Activated CD4-positive, alpha-beta T cell treated with anti-CD3 and anti-CD28 coated beads for 36 hours (primary cell): ENCODE measurements at regions of chr19 and their contacts with region 1.

Region 1: DNA sequence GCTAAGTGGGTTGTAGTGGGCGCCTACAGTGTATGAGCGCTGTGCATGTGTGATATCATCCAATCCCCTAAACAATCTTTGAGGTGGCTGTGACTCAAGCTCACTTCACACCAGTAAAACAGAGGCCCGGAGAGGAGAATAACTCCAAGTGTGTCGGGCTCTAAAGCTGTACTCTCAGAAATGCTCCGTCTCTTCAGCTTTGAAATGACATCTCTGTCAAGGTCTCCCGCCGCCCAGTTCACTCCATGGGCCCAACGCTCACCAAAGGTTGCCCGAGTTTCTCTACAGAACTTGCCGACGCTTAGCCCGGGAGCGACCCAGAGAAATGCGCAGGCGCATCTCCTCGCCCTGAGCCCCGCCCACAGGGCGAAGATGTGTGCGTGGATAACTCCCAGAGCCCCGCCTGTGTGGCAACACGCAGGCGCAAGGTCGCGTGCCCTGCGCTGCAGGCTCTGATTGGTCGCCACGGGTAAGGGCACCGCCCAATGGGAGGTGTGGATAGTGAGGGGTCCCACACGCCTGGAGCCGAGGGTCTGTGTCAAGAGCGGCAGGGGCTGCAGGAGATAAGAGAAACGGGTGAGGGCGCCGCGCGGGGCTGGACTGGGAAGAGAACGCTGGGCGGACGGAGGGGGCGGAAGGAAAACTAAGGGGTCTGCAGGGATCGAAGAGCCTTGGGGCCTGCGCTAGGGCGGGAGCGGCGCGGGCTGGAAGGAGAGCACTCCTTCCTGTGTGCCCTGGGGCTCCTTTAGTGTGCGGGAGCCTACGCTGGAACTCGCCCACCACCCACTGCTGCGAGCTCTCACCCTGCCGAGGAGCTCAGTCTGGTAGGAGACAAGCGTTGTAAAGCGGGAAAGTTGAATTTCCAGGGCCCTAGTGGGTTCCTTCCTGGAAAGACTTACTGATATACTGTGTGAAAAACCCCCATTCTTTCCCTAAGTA is at the start of gene ZNF526:
- DNase-seq: peak; percentile 98
- ATAC-seq: peak; percentile 83
- H3K4me3 Mint-ChIP-seq: peak within 1 kb of the TSS; percentile 85
- H3K27ac Mint-ChIP-seq: peak within 1 kb of the TSS; percentile 90
- H3K4me1 Mint-ChIP-seq: peaks cover 50% of the 10 kb centered on the region
- H3K27me3 Mint-ChIP-seq: no peaks in the 10 kb centered on the region
- total RNA-seq, gene ZNF526: 11.9 to 15.2 TPM

Region 2: DNA sequence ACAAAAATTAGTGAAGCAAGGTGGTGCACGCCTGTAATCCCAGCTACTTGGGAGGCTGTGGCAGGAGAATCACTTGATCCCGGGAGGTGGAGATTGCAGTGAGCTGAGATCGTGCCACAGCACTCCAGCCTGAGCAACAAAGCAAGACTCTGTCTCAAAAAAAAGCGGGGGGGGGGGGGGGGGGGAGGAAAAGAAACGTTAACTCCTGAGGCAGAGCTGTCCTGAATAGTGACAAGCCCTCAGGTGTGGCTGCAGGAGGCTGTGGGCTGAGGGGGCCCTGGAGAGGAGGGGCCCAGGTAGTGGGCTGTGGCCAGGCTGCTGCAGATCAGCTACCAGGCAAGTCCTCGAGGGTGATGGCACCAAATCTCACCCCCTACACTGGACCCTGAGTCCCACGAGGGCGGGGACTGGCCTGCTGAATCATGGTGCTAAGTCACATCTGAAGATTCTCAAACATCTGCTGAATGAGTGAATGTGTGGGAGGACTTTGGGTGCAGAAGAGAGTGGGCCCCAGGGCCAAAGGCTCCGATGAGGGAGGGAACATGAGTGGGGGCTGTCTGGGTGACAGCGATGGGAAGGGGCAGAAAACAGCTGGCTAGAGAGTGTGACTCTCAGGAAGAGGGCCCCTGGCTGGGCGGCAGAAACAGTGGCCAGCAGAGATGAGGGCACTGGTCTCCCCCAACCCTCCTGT is 201.4 kb before region 1 on chr19:
- CTCF ChIA-PET with region 1: no interaction called
- POLR2A ChIA-PET with region 1: no interaction called
- intact Hi-C with region 1: no loop called
- DNase-seq: no peak
- ATAC-seq: no peak
- H3K4me3 Mint-ChIP-seq: no peak overlapping the region
- H3K27ac Mint-ChIP-seq: no peak overlapping the region
- H3K4me1 Mint-ChIP-seq: no peaks in the 10 kb centered on the region
- H3K27me3 Mint-ChIP-seq: no peaks in the 10 kb centered on the region

Region 3: DNA sequence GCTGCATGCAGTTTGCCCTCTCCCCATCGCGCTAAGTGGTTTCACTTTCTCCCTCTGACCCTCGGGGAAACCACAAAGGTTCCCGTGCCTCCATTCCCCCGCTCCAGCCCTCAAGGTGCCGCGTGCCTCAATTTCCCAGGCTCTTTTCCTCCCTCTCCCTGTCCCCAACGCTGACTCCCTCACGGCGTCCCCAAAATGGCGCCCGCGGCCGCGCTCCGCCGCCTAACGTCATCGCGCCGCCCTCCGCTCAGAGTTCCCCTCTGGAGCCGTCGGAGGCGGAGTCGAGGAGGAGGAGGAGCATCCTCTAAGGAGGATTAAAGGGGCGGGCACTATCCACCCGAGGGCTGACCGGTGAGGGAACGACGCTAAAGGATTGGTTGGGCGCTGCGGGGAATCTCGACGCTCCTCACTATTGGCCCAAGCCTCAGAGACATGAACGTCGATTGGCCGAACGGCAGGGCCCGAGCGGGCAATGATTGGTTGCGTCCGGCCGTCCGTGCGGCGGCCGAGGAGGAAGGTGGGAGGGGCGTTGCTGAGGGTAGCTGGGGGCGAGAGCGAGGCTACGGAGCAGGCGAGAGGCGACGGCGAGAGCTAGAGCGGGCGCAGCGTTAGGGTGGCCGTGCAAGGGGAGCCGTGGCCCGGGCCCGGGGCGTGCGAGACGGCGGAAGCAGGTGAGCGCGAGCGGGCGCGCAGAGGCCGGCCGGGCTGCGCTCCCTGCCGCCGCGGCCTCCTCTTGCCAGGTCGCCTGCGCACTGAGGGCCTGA is 144.3 kb before region 1 on chr19 and contains the start of gene ZNF574:
- CTCF ChIA-PET with region 1: no interaction called
- POLR2A ChIA-PET with region 1: no interaction called
- intact Hi-C with region 1: loop called (anchors 1 kb)
- DNase-seq: peak; percentile 99
- ATAC-seq: peak; percentile 99
- H3K4me3 Mint-ChIP-seq: peak within 1 kb of the TSS; percentile 89
- H3K27ac Mint-ChIP-seq: peak within 1 kb of the TSS; percentile 99
- H3K4me1 Mint-ChIP-seq: peaks cover 27% of the 10 kb centered on the region
- H3K27me3 Mint-ChIP-seq: no peaks in the 10 kb centered on the region
- total RNA-seq, gene ZNF574: 10.7 to 14.8 TPM

Region 4: GRCh38 chr19:42244347-42245220 is 24.5 kb after region 1 on chr19:
- CTCF ChIA-PET with region 1: interaction called, 7 read pairs
- POLR2A ChIA-PET with region 1: interaction called, 16 read pairs
- intact Hi-C with region 1: loop called (anchors 1 kb)
- DNase-seq: peak; percentile 96
- ATAC-seq: peak; percentile 49
- H3K4me3 Mint-ChIP-seq: peak overlapping the region; percentile 93
- H3K27ac Mint-ChIP-seq: peak overlapping the region; percentile 94
- H3K4me1 Mint-ChIP-seq: peaks cover 42% of the 10 kb centered on the region
- H3K27me3 Mint-ChIP-seq: no peaks in the 10 kb centered on the region

Region 5: GRCh38 chr19:42283143-42284065 is 63.3 kb after region 1 on chr19:
- CTCF ChIA-PET with region 1: interaction called, 7 read pairs
- POLR2A ChIA-PET with region 1: no interaction called
- intact Hi-C with region 1: loop called (anchors 1 kb)
- DNase-seq: peak; percentile 98
- ATAC-seq: peak; percentile 62
- H3K4me3 Mint-ChIP-seq: no peak overlapping the region
- H3K27ac Mint-ChIP-seq: no peak overlapping the region
- H3K4me1 Mint-ChIP-seq: peaks cover 41% of the 10 kb centered on the region
- H3K27me3 Mint-ChIP-seq: no peaks in the 10 kb centered on the region

Region 6: DNA sequence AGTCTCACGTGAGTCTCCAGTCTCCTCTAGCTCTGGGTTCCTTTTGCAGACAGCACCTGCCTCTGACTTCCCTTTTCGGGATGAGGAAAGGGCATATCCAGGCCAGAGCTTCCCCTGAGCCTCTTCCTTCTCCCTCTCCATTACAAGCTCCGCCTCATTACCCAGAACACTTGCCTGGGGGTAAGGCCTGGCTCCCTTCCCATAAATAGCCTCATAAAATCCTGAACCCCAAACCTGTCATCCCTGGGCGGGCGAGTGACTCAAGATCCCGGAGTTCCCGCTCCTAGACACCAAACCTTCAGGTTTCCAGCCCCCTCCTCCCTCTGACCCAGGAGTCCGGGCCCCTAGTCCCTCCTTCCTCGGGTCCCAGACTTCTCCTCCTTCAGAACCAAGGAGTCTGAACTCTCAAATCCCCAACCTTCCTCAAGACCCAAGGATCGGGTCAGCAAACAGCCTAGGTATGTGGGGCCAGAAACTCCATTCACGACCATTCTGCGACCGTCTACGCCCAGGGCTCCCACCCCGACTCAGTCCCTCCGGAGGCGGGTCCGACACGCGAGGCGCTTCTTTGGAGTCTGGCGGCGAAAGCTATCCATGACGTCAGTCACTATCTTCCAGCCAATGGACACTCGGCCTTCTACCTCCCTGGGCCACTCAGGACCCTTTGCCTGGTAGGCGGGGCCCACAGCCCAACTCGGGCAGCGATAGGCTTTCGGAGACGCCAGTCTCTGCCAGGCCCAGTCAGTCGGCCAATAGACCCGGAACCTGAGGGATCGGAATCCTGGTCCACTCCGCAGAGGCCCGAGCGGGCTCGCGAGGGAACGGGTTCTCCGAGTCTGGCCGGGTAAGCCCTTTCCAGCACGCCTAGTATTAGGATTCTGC is 176.5 kb after region 1 on chr19:
- CTCF ChIA-PET with region 1: no interaction called
- POLR2A ChIA-PET with region 1: no interaction called
- intact Hi-C with region 1: loop called in 1 of 2 experiments (anchors 2 kb)
- DNase-seq: peak; percentile 97
- ATAC-seq: peak; percentile 99
- H3K4me3 Mint-ChIP-seq: peak overlapping the region; percentile 88
- H3K27ac Mint-ChIP-seq: peak overlapping the region; percentile 90
- H3K4me1 Mint-ChIP-seq: peaks cover 18% of the 10 kb centered on the region
- H3K27me3 Mint-ChIP-seq: peaks cover 2% of the 10 kb centered on the region